ENCODE measurements at regions of chr6 and their contacts with region 1.

Region 1: DNA sequence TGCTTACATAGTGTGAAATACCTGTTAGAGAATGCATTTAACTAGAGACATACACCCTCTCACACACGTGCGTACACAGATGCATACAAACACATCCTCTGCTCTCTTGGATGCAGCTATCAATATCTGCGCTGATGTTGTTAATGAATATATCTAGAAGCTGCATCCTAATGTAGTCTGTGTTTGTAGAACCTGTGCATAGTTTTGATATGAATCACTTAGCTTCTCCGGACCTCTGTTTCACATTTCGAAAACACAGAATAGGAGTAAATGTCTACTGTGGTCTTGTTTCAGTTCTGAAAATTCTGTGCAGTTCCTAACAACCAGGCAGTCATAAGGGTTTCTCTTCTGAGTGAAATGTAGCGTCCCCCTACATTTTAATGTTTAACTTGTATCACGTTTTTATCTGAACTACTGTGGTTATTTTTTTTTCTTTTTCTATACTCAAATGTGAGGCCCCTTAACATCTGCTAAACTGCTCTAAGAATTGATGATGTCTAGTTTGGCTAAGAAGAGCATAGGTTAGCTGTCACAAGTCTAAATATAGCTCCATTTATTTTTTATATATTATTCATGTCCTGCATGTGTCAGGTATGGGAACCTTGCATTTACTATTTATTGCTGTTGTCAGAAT is 254.5 kb downstream of the TMEM242 start:
- DNase-seq: peak; percentile 70
- CTCF ChIP-seq: no peak

Region 2: GRCh38 chr6:157045831-157046454 is 22.9 kb before region 1 on chr6:
- CTCF ChIA-PET with region 1: interaction called, 11 read pairs
- POLR2A ChIA-PET with region 1: no interaction called
- DNase-seq: no peak
- CTCF ChIP-seq: peak; percentile 41

Region 3: GRCh38 chr6:157079771-157080170 is 11.0 kb after region 1 on chr6:
- CTCF ChIA-PET with region 1: interaction called, 12 read pairs
- POLR2A ChIA-PET with region 1: no interaction called
- DNase-seq: no peak
- CTCF ChIP-seq: no peak

Region 4: GRCh38 chr6:157099912-157100593 is 31.2 kb after region 1 on chr6:
- CTCF ChIA-PET with region 1: no interaction called
- POLR2A ChIA-PET with region 1: no interaction called
- DNase-seq: peak; percentile 71
- CTCF ChIP-seq: no peak

Region 5: GRCh38 chr6:157281570-157281969 is 212.8 kb after region 1 on chr6:
- CTCF ChIA-PET with region 1: no interaction called
- POLR2A ChIA-PET with region 1: no interaction called
- DNase-seq: no peak
- CTCF ChIP-seq: no peak

Region 6: DNA sequence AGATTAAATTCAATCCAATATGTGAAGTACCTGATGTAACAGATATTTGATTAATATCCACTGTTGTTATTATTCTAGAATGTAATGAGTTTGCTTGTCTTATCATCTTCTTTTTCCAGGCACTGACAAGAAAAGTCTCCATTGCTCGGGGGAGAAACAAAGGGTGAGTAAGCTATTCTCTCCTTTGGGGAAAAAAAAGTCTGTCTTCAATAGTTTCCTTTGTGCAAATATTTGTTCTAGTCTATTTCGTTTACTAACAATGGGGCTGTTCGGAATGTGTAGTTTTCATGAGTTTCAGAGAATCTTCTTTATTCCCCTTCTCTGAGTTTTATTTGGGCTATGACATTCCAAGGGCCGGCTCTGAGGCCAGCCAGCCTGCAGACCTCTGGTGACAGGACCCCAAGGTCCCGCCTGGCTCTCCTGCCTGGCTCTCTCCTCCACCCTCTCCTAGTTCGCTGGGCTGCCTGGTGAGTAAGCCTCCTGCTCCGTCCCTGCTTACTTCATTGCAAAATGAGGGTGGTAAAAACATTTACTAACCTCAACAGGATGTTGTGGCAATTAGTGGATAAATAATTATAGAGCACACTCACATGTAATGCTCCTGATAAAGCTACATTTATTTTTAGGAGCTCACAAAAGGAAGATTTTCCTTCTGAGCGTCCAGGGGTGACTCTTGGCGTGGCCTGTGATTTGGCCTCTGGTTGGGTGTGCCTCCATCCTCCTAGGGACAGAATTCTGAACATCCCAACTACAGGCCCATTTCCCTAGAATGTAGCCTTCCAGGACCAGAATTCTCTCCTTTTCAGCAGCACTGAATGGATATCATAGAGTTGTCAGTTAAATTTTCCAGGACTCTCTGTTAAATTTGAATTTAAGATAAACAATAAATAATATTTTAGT is 711.1 kb after region 1 on chr6:
- CTCF ChIA-PET with region 1: no interaction called
- POLR2A ChIA-PET with region 1: no interaction called
- DNase-seq: no peak
- CTCF ChIP-seq: no peak

Measured in GM10248 (cell line).